ENCODE measurements at regions of chr10 and their contacts with region 1.

Region 1: GRCh38 chr10:33125522-33126517 is 167.8 kb upstream of the ITGB1 start:
- DNase-seq: peak in 9 of 14 experiments; percentile 26 to 86 (median 49)
- ATAC-seq: peak; percentile 89
- H3K4me3 ChIP-seq: no peak overlapping the region
- H3K4me3 Mint-ChIP-seq: peak overlapping the region; percentile 65
- H3K27ac ChIP-seq: peak overlapping the region; percentile 63 to 83
- H3K27ac Mint-ChIP-seq: peak overlapping the region; percentile 96
- H3K4me1 ChIP-seq: peaks cover 87% of the 10 kb centered on the region
- H3K4me1 Mint-ChIP-seq: peaks cover 90% of the 10 kb centered on the region
- H3K27me3 ChIP-seq: no peaks in the 10 kb centered on the region
- H3K27me3 Mint-ChIP-seq: no peaks in the 10 kb centered on the region
- CTCF ChIP-seq: no peak

Region 2: GRCh38 chr10:32386623-32387260 is 739.1 kb before region 1 on chr10:
- CTCF ChIA-PET with region 1: no interaction called
- POLR2A ChIA-PET with region 1: no interaction called
- intact Hi-C with region 1: loop called in 1 of 2 experiments (anchors 10 kb)
- DNase-seq: no peak
- ATAC-seq: no peak
- H3K4me3 ChIP-seq: no peak overlapping the region
- H3K4me3 Mint-ChIP-seq: peak overlapping the region; percentile 0
- H3K27ac ChIP-seq: no peak overlapping the region
- H3K27ac Mint-ChIP-seq: no peak overlapping the region
- H3K4me1 ChIP-seq: peaks cover 8% of the 10 kb centered on the region
- H3K4me1 Mint-ChIP-seq: peaks cover 10% of the 10 kb centered on the region
- H3K27me3 ChIP-seq: no peaks in the 10 kb centered on the region
- H3K27me3 Mint-ChIP-seq: no peaks in the 10 kb centered on the region
- CTCF ChIP-seq: no peak

Region 3: DNA sequence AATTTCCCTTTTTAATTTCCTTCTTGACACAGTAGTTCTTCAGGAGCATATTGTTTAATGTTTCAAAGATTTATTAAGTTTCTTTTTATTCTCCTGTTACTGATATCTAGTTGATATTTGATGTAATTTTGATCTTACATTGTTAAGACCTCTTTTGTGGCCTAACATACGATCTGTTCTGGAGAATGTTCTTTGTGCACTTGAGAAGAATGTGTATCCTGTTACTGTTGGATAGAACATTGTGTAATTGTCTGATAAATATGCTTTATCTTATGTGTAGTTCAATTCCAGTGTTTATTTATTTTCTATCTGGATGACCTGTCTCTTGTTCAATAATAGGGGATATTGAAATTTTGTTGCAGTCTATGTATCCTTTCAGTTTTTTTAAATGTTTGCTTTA is 274.5 kb before region 1 on chr10:
- CTCF ChIA-PET with region 1: no interaction called
- POLR2A ChIA-PET with region 1: no interaction called
- intact Hi-C with region 1: no loop called
- DNase-seq: no peak
- ATAC-seq: no peak
- H3K4me3 ChIP-seq: no peak overlapping the region
- H3K4me3 Mint-ChIP-seq: no peak overlapping the region
- H3K27ac ChIP-seq: no peak overlapping the region
- H3K27ac Mint-ChIP-seq: no peak overlapping the region
- H3K4me1 ChIP-seq: no peaks in the 10 kb centered on the region
- H3K4me1 Mint-ChIP-seq: peaks cover 6% of the 10 kb centered on the region
- H3K27me3 ChIP-seq: no peaks in the 10 kb centered on the region
- H3K27me3 Mint-ChIP-seq: no peaks in the 10 kb centered on the region
- CTCF ChIP-seq: no peak

Region 4: GRCh38 chr10:33109788-33110469 is 15.9 kb before region 1 on chr10:
- CTCF ChIA-PET with region 1: interaction called, 6 read pairs
- POLR2A ChIA-PET with region 1: interaction called, 37 read pairs
- intact Hi-C with region 1: no loop called
- DNase-seq: peak in 3 of 14 experiments; percentile 58 to 83 (median 61)
- ATAC-seq: peak; percentile 37
- H3K4me3 ChIP-seq: peak overlapping the region; percentile 7
- H3K4me3 Mint-ChIP-seq: peak overlapping the region; percentile 3
- H3K27ac ChIP-seq: peak overlapping the region; percentile 48 to 79
- H3K27ac Mint-ChIP-seq: peak overlapping the region; percentile 75
- H3K4me1 ChIP-seq: peaks cover 80% of the 10 kb centered on the region
- H3K4me1 Mint-ChIP-seq: peaks cover 72% of the 10 kb centered on the region
- H3K27me3 ChIP-seq: no peaks in the 10 kb centered on the region
- H3K27me3 Mint-ChIP-seq: no peaks in the 10 kb centered on the region
- CTCF ChIP-seq: no peak

Region 5: GRCh38 chr10:33216661-33217427 is 91.0 kb after region 1 on chr10:
- CTCF ChIA-PET with region 1: no interaction called
- POLR2A ChIA-PET with region 1: no interaction called
- intact Hi-C with region 1: no loop called
- DNase-seq: no peak
- ATAC-seq: no peak
- H3K4me3 ChIP-seq: no peak overlapping the region
- H3K4me3 Mint-ChIP-seq: no peak overlapping the region
- H3K27ac ChIP-seq: no peak overlapping the region
- H3K27ac Mint-ChIP-seq: no peak overlapping the region
- H3K4me1 ChIP-seq: peaks cover 3% of the 10 kb centered on the region
- H3K4me1 Mint-ChIP-seq: peaks cover 11% of the 10 kb centered on the region
- H3K27me3 ChIP-seq: no peaks in the 10 kb centered on the region
- H3K27me3 Mint-ChIP-seq: no peaks in the 10 kb centered on the region
- CTCF ChIP-seq: no peak